GM12878 (cell line): ENCODE measurements at regions of chr7 and their contacts with region 1.

Region 1: GRCh38 chr7:108114117-108114841 is 15.9 kb downstream of the LAMB4 start:
- DNase-seq: no peak
- ATAC-seq: peak; percentile 95
- H3K4me3 ChIP-seq: no peak overlapping the region
- H3K27ac ChIP-seq: no peak overlapping the region
- H3K4me1 ChIP-seq: no peaks in the 10 kb centered on the region
- H3K27me3 ChIP-seq: no peaks in the 10 kb centered on the region
- CTCF ChIP-seq: peak; percentile 68 to 80 (median 70)
- EP300 ChIP-seq: no peak
- POLR2A ChIP-seq: no peak
- RAD21 ChIP-seq: peak; percentile 94

Region 2: GRCh38 chr7:108129018-108129965 is 15.0 kb after region 1 on chr7:
- CTCF ChIA-PET with region 1: interaction called, 34 read pairs
- POLR2A ChIA-PET with region 1: interaction called, 6 read pairs
- RAD21 ChIA-PET with region 1: interaction called, 27 read pairs
- SMC1A ChIA-PET with region 1: interaction called, 65 read pairs
- in situ Hi-C with region 1: no loop called
- intact Hi-C with region 1: no loop called
- DNase-seq: no peak
- ATAC-seq: no peak
- H3K4me3 ChIP-seq: no peak overlapping the region
- H3K27ac ChIP-seq: no peak overlapping the region
- H3K4me1 ChIP-seq: peaks cover 3% of the 10 kb centered on the region; the same call in 1 of the 2 replicates
- H3K27me3 ChIP-seq: 0 out of 4 replicates have a peak, but pooled peaks cover 0 to 3% of the 10 kb centered on the region in 2 experiments
- CTCF ChIP-seq: no peak
- EP300 ChIP-seq: no peak
- POLR2A ChIP-seq: no peak
- RAD21 ChIP-seq: no peak

Region 3: GRCh38 chr7:108135446-108136190 is 21.3 kb after region 1 on chr7:
- CTCF ChIA-PET with region 1: interaction called, 50 read pairs
- POLR2A ChIA-PET with region 1: interaction called, 6 read pairs
- RAD21 ChIA-PET with region 1: interaction called, 27 read pairs
- SMC1A ChIA-PET with region 1: interaction called, 65 read pairs
- in situ Hi-C with region 1: no loop called
- intact Hi-C with region 1: no loop called
- DNase-seq: peak; percentile 88
- ATAC-seq: peak; percentile 93
- H3K4me3 ChIP-seq: 0 out of 2 replicates have a peak overlapping the region, but pooled peaks have one; percentile 14
- H3K27ac ChIP-seq: peak overlapping the region; percentile 59
- H3K4me1 ChIP-seq: peaks cover 18% of the 10 kb centered on the region
- H3K27me3 ChIP-seq: no peaks in the 10 kb centered on the region
- CTCF ChIP-seq: no peak
- EP300 ChIP-seq: peak; percentile 79 to 93; a peak in 3 of 4 replicates
- POLR2A ChIP-seq: no peak
- RAD21 ChIP-seq: 0 out of 2 replicates have a peak, but pooled peaks have one; percentile 8

Region 4: DNA sequence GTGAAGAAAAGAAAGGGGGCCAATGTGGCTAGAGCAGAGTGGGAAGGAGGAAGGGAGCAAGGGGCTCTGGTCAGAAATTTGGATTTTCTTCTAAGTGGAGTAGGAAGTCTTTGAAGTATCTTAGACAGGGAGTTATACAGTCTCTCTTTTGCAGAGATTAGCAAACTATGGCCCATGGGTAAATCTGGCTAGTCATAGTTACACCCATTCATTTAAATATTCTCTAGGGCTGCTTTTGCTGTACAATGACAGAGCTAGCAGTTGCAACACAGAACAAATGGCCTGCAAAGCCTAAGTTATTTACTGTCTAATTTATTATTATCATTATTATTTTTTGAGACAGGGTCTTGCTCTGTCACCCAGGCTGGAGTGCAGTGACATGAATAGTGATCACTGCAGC is 26.4 kb after region 1 on chr7:
- CTCF ChIA-PET with region 1: interaction called, 254 read pairs
- POLR2A ChIA-PET with region 1: interaction called, 9 read pairs
- RAD21 ChIA-PET with region 1: interaction called, 142 read pairs
- SMC1A ChIA-PET with region 1: interaction called, 130 read pairs
- in situ Hi-C with region 1: loop called (anchors 5 kb)
- intact Hi-C with region 1: no loop called
- DNase-seq: no peak
- ATAC-seq: no peak
- H3K4me3 ChIP-seq: no peak overlapping the region
- H3K27ac ChIP-seq: no peak overlapping the region
- H3K4me1 ChIP-seq: peaks cover 7% of the 10 kb centered on the region; the same call in 1 of the 2 replicates
- H3K27me3 ChIP-seq: no peaks in the 10 kb centered on the region
- CTCF ChIP-seq: no peak
- EP300 ChIP-seq: no peak
- POLR2A ChIP-seq: no peak
- RAD21 ChIP-seq: no peak

Region 5: DNA sequence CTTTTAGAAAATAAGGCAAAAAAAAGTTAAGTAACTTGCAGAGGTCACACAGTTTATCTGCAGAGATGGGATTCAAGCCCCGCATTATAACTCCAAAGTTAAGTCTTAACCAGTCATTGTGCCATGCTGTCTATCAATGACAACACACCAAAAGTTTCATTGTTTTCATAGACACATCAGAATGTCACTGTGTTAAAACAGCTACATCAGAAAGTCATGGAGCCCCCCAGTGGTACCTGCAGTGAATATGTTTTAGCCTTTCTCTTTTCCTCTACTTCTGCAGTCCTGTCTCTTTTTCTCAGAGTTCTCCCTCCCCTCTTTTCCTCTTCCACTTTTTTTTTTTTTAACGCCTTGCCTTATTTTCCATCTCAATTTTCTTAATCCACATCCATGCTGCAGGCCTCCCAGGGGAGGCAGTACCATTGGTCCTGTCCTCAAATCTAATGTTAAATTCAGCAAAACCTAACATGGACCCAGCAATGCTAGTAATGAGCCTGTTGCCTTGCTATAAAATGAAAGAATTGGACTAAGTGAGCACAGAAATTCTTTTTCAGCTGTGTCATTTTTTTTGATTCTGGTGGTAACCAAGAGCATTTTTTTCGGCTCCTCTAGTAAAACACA is 345.8 kb after region 1 on chr7:
- CTCF ChIA-PET with region 1: no interaction called
- POLR2A ChIA-PET with region 1: no interaction called
- RAD21 ChIA-PET with region 1: interaction called, 3 read pairs
- SMC1A ChIA-PET with region 1: no interaction called
- in situ Hi-C with region 1: no loop called
- intact Hi-C with region 1: loop called (anchors 5 kb)
- DNase-seq: no peak
- ATAC-seq: peak; percentile 77
- H3K4me3 ChIP-seq: no peak overlapping the region
- H3K27ac ChIP-seq: no peak overlapping the region
- H3K4me1 ChIP-seq: no peaks in the 10 kb centered on the region
- H3K27me3 ChIP-seq: peaks cover 11 to 16% of the 10 kb centered on the region in 2 experiments
- CTCF ChIP-seq: peak; percentile 50 to 73 (median 60); a peak in 5 of 6 replicates
- EP300 ChIP-seq: no peak
- POLR2A ChIP-seq: no peak
- RAD21 ChIP-seq: peak; percentile 82